Heart left ventricle (tissue), 16 donors: ENCODE measurements at regions of chr20 and their contacts with region 1.

Region 1: DNA sequence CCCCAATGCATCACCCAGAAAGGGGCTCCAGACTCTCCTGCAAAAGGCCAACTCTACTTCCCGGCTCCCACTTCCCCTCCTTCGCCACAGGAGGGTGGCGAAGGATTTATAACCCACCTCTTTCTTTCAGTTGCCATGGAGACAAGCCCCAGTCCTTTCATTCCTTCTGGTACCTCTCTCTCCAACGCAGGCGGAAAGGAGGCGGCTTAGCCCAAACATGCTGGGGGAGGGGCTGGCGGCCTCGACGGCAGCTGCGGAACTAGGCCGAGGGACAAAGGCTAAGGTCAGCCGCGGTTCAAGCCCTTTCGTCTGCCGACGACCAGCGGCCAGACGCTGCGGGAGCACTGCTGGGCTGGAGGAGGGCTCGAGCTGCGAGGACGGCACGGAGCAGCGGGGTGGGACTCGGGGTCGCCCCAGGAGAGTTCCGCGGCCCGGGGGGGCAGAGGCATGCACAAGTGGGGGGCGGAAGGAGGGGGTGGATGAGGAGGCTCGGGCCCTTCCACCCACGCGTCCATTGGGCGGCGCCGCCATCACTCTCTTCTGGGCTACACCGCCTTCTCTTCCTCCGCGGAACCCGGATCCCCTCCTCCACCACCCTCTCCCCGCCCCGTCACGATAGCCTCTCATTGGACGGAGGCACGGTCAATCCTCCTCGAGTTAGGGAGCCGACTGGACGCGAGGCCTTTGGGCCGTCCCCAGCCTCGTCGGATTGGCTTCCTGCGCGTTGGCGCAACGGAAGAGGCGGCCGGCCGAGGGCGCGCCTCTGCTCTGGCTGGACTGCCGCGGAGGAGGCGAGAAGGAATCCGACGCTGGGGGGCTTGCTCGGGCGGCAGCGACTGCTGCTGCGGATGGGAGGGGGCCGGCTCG is at the start of gene PANK2:
- DNase-seq: peak; percentile 99 to 100 (median 100)
- ATAC-seq: peak; percentile 97 to 99 (median 99)
- H3K4me3 ChIP-seq: peak within 1 kb of the TSS; percentile 59 to 100 (median 96)
- H3K27ac ChIP-seq: peak within 1 kb of the TSS; percentile 88 to 99 (median 96)
- H3K4me1 ChIP-seq: peaks cover 10 to 48% (median 42%) of the 10 kb centered on the region in 12 donors
- H3K27me3 ChIP-seq: no peaks in the 10 kb centered on the region
- CTCF ChIP-seq: peak in 11 of 12 donors; percentile 20 to 68 (median 44)
- POLR2A ChIP-seq: peak; percentile 45 to 94
- total RNA-seq, gene PANK2: 15.9 to 28.9 (median 18.1) TPM

Region 2: DNA sequence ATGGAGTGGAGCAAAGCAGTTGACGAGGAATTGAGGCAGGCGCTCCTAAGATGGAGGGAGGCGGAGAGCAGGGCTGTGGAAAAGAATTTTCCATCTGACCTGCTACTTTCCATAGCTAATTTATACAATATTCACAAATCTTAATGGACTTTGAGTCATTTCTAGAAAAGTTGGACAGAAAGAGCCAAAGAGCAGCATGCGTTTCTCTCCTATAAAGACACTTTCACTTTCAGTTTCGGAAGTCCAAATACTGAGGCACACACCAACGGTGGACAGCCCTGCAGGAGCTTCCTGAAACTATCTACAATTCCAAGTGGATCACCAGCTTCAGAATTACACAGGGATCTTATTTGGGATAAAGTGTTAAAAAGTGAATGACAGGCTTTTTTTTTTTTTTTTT is 43.8 kb after region 1 on chr20:
- intact Hi-C with region 1: loop called in 3 of 10 experiments (anchors 5 kb)
- DNase-seq: no peak
- ATAC-seq: peak in 1 of 4 donors; percentile 38
- H3K4me3 ChIP-seq: peak overlapping the region in 11 of 12 donors; percentile 3 to 56 (median 46)
- H3K27ac ChIP-seq: peak overlapping the region in 11 of 12 donors; percentile 12 to 85 (median 66)
- H3K4me1 ChIP-seq: peaks cover 10 to 72% (median 48%) of the 10 kb centered on the region in 12 donors
- H3K27me3 ChIP-seq: no peaks in the 10 kb centered on the region
- CTCF ChIP-seq: no peak
- POLR2A ChIP-seq: no peak

Region 3: DNA sequence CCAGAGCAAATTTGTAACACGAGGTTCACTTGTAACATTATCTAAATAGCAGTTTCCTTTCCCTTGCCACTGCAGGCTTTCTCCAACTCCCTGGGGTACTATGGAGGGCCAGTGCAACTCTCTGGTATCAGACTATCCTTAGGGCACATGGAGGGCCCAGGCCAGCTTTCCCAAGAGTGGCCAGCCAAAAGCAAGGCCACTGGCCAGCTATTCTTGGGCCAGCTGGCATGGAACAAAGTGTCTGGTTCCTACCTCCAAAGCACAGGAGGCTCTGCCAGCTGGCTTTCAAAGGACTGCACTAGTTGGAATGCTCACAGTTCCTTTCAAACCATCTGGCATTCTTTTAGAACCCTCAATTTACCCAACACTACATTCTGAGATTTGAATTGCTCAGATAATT is 117.8 kb after region 1 on chr20:
- intact Hi-C with region 1: loop called in 7 of 10 experiments (anchors 2 to 10 kb)
- DNase-seq: peak; percentile 63 to 83 (median 73)
- ATAC-seq: peak; percentile 91 to 96 (median 96)
- H3K4me3 ChIP-seq: no peak overlapping the region
- H3K27ac ChIP-seq: peak overlapping the region in 10 of 12 donors; percentile 8 to 43 (median 27)
- H3K4me1 ChIP-seq: peaks cover 0 to 44% (median 20%) of the 10 kb centered on the region in 12 donors
- H3K27me3 ChIP-seq: no peaks in the 10 kb centered on the region
- CTCF ChIP-seq: no peak
- POLR2A ChIP-seq: no peak

Region 4: GRCh38 chr20:4076671-4077070 is 187.8 kb after region 1 on chr20:
- intact Hi-C with region 1: loop called in 5 of 10 experiments (anchors 5 to 10 kb)
- DNase-seq: no peak
- ATAC-seq: no peak
- H3K4me3 ChIP-seq: no peak overlapping the region
- H3K27ac ChIP-seq: no peak overlapping the region
- H3K4me1 ChIP-seq: peaks cover 0 to 15% (median 0%) of the 10 kb centered on the region in 12 donors
- H3K27me3 ChIP-seq: no peaks in the 10 kb centered on the region
- CTCF ChIP-seq: no peak
- POLR2A ChIP-seq: no peak